GM13977 (cell line): ENCODE measurements at regions of chr4 and their contacts with region 1.

Region 1: GRCh38 chr4:38062088-38062893 is 102.1 kb downstream of the PTTG2 start:
- DNase-seq: peak; percentile 56
- CTCF ChIP-seq: peak; percentile 73

Region 2: DNA sequence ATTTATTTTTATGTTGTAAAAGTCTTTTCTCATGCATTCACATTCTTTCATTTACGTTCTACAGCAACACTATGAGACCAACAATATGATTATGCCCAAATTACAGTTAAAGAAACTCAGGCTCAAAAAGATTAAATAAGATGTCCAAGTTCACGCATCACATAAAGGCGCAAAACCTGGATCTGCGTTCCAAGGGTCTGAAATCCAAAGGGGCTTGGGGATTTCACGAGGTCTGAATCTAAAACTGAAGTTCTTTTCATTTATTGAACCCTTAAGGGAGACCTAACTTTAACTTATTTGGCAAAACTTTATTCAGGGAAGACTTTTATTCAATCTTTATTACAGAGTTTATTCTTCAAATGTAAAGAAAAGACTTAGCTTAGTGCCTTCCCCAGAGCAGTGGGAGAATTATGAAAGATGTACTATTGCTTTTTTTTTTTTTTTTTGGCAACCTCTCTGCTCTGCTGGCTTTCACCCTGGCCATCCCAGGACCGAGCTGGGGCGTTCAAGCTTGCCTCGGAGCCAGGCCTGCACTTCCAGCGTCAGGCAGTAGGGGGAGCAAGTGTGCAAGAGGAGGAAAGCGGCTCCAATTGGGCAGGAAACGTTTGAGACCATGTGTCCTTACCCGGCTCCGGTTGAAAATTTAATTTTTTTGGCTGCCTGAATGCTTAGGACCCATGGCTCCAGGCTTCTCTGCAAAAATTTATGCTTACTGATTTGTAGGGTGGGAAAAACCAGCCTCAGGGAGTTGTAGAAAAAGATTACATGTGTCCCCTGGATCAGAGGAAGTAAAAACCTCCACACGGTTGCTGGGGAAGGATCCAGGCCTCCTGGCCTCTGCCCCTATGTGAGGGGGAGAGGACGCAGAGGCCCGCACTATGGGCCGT is 257.4 kb after region 1 on chr4:
- in situ Hi-C with region 1: loop called (anchors 25 kb)
- DNase-seq: peak; percentile 89
- CTCF ChIP-seq: peak; percentile 95

Region 3: DNA sequence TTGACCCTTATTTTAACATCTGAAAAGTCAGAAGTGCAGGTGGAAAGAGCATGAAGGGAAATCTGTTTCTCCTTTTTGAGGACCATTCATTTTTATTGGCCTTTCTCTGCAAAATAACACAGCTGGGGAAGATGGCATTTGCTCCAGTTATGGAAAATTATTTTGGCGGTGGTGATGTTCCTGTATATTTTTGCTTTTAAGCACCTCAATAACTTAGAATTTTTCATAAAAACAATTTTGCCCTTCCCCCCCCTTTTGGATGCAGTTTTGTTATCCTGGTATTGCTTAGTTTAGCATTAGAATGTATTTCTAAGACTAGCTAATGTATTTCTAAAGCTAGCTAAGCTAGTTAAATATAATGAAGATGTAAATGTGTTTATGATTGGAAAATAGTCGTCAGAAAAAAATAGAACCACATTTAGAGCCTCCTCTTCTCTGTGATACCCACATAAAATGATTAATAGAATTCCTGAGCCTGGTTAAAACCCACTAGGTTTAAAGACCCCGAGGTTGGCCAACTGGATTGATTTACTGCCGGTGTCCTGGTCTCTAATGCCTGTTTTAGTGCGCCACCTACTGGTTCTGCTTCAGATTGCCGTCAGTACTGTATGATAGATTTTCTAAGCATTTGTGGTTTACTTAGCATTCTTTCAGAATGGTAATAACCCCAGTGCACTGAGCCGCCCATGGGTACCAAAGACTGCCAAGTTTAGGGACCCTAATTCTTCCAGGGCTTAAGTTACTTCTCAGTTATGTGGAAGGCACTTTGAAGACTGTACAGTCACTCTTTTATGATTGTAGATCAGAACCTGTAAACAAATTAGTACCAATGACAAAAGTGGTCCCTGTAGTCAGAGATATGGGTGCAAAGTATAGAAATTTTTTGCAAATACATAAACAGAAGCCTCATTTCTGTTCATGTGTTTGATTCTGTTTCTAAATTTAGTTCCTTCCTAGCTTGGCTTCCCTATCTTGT is 613.1 kb after region 1 on chr4:
- in situ Hi-C with region 1: loop called (anchors 10 kb)
- DNase-seq: peak; percentile 71
- CTCF ChIP-seq: peak; percentile 87

Region 4: GRCh38 chr4:38730830-38731646 is 668.7 kb after region 1 on chr4:
- in situ Hi-C with region 1: loop called (anchors 25 kb)
- DNase-seq: peak; percentile 73
- CTCF ChIP-seq: peak; percentile 91